CD8-positive, alpha-beta memory T cell (primary cell): ENCODE measurements at regions of chr6 and their contacts with region 1.

Region 1: GRCh38 chr6:13574149-13574570 is 241 bp upstream of the SIRT5 start:
- DNase-seq: peak; percentile 89 to 97 (median 96)
- H3K4me3 ChIP-seq: peak overlapping the region; percentile 95
- H3K4me3 Mint-ChIP-seq: peak overlapping the region; percentile 90 to 97 (median 94)
- H3K27ac ChIP-seq: peak overlapping the region; percentile 83
- H3K27ac Mint-ChIP-seq: peak overlapping the region; percentile 92 to 99 (median 96)
- H3K4me1 ChIP-seq: peaks cover 10% of the 10 kb centered on the region
- H3K4me1 Mint-ChIP-seq: peaks cover 21 to 31% (median 29%) of the 10 kb centered on the region in 3 donors
- H3K27me3 ChIP-seq: no peaks in the 10 kb centered on the region
- H3K27me3 Mint-ChIP-seq: no peaks in the 10 kb centered on the region

Region 2: GRCh38 chr6:13328076-13328874 is 245.9 kb before region 1 on chr6 and contains the start of gene TBC1D7:
- CTCF ChIA-PET with region 1: interaction called, 12 read pairs
- POLR2A ChIA-PET with region 1: interaction called, 18 read pairs
- DNase-seq: peak; percentile 92 to 96 (median 94)
- H3K4me3 ChIP-seq: peak within 1 kb of the TSS; percentile 89
- H3K4me3 Mint-ChIP-seq: peak within 1 kb of the TSS; percentile 91 to 98 (median 96)
- H3K27ac ChIP-seq: peak within 1 kb of the TSS; percentile 91
- H3K27ac Mint-ChIP-seq: peak within 1 kb of the TSS; percentile 87 to 99 (median 98)
- H3K4me1 ChIP-seq: peaks cover 17% of the 10 kb centered on the region
- H3K4me1 Mint-ChIP-seq: peaks cover 23 to 39% (median 28%) of the 10 kb centered on the region in 3 donors
- H3K27me3 ChIP-seq: no peaks in the 10 kb centered on the region
- H3K27me3 Mint-ChIP-seq: no peaks in the 10 kb centered on the region
- total RNA-seq, gene TBC1D7: 21.8 to 23.2 TPM

Region 3: DNA sequence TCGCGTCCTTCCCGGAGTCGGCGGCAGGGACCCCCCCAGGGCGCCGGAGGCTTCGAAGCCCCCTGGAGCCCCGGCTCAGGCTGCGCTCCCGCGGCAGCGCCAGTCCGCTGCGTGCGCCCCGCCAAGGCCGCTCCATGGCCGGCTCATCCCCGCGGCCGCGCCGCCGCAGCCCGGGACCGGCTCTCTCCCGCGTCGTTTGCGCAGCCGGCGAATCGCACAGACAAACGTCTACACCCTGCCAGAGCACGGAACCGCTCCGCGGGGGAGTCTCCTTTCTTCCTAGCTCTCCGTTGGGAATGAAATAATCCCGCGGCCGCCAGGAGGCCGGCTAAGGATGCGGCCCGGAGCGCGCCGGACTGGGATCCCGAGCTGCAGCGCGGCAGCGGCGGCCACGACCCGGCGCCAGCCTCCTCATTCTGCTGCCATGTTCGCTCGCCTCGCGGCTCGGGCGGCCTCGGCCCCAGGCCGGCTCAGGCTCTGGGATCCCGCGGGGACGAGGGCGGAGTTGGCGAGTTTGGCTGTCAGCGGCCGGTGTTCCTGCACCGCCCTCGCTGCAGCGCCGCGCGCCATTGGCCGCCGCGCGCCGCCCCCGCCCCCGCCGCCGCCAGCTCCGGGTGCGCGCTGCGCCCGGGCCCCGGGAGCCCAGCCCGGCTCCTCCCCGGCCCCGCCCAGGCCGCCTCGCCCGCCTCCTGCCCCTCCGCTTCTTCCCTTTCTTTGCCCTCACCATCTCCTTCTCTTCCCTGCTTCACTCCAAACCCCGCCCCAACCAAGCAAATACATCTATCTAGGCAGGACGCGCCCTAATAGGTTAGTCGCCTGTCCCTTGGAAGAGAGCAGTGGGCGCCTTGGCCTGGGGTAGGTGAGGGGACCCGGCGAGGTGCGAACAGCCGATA is 86.8 kb before region 1 on chr6 and contains the start of gene GFOD1:
- CTCF ChIA-PET with region 1: interaction called, 9 read pairs
- POLR2A ChIA-PET with region 1: interaction called, 11 read pairs
- DNase-seq: peak; percentile 65 to 78 (median 66)
- H3K4me3 ChIP-seq: peak within 1 kb of the TSS; percentile 80
- H3K4me3 Mint-ChIP-seq: peak within 1 kb of the TSS; percentile 83 to 96 (median 90)
- H3K27ac ChIP-seq: peak within 1 kb of the TSS; percentile 67
- H3K27ac Mint-ChIP-seq: peak within 1 kb of the TSS; percentile 24 to 93 (median 78)
- H3K4me1 ChIP-seq: peaks cover 12% of the 10 kb centered on the region
- H3K4me1 Mint-ChIP-seq: peaks cover 33 to 42% (median 33%) of the 10 kb centered on the region in 3 donors
- H3K27me3 ChIP-seq: no peaks in the 10 kb centered on the region
- H3K27me3 Mint-ChIP-seq: peaks cover 0 to 3% of the 10 kb centered on the region in 2 donors
- total RNA-seq, gene GFOD1: 8.2 to 8.7 TPM

Region 4: GRCh38 chr6:13593720-13594119 is 19.6 kb after region 1 on chr6:
- CTCF ChIA-PET with region 1: interaction called, 13 read pairs
- POLR2A ChIA-PET with region 1: no interaction called
- DNase-seq: no peak
- H3K4me3 ChIP-seq: no peak overlapping the region
- H3K4me3 Mint-ChIP-seq: no peak overlapping the region
- H3K27ac ChIP-seq: no peak overlapping the region
- H3K27ac Mint-ChIP-seq: no peak overlapping the region
- H3K4me1 ChIP-seq: no peaks in the 10 kb centered on the region
- H3K4me1 Mint-ChIP-seq: peaks cover 0 to 2% (median 0%) of the 10 kb centered on the region in 3 donors
- H3K27me3 ChIP-seq: no peaks in the 10 kb centered on the region
- H3K27me3 Mint-ChIP-seq: no peaks in the 10 kb centered on the region

Region 5: DNA sequence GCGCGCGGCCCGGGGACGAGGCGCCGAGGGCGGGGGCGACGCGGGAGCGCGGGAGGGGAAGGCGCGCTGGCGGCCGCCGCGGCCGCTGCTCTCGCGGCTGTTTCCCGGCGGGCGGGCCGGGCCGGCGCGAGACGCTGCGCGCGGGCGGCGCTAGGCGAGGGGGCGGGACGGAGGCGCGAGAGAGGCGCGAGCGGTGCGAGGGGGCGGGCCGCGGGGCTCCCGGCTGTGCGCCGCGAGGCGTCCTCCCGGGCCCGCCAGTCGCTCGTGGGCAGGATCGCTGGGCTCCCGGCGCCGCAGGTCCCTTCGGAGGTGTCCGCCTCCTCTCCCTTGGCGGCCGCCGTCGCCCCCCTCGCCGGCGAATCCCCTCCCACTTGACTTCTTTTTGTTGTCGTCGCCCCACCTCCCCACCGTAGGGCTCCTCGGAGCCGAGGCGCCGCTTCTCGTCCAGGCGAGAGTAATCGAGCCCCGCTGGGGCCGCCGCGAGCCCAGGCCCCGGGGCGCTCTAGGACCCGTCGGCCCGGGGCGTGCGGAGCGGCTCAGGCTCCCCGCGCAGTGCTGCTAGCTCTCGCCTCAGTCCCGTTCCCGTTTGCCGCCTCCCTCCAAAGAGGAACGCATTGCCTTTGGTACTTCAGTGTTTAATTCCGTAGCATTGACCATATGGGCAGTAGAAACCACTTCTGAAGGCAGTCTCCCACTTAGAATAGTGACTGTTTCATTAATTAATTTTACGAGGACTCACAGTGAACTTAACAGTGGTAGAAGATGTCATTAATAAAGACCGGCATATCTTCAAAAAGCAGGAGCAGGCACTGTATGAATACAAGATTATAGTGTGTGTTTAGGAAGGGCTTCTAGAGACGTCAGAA is 137.8 kb after region 1 on chr6 and contains the start of gene RANBP9:
- CTCF ChIA-PET with region 1: interaction called, 18 read pairs
- POLR2A ChIA-PET with region 1: interaction called, 4 read pairs
- DNase-seq: peak; percentile 82 to 95 (median 90)
- H3K4me3 ChIP-seq: peak within 1 kb of the TSS; percentile 57
- H3K4me3 Mint-ChIP-seq: peak within 1 kb of the TSS; percentile 96 to 99 (median 98)
- H3K27ac ChIP-seq: peak within 1 kb of the TSS; percentile 75
- H3K27ac Mint-ChIP-seq: peak within 1 kb of the TSS; percentile 96 to 99 (median 98)
- H3K4me1 ChIP-seq: peaks cover 31% of the 10 kb centered on the region
- H3K4me1 Mint-ChIP-seq: peaks cover 41 to 58% (median 53%) of the 10 kb centered on the region in 3 donors
- H3K27me3 ChIP-seq: no peaks in the 10 kb centered on the region
- H3K27me3 Mint-ChIP-seq: no peaks in the 10 kb centered on the region
- total RNA-seq, gene RANBP9: 45.4 to 47.0 TPM